Right ventricle myocardium inferior (tissue), 1 donor: ENCODE measurements at regions of chr5 and their contacts with region 1.

Region 1: DNA sequence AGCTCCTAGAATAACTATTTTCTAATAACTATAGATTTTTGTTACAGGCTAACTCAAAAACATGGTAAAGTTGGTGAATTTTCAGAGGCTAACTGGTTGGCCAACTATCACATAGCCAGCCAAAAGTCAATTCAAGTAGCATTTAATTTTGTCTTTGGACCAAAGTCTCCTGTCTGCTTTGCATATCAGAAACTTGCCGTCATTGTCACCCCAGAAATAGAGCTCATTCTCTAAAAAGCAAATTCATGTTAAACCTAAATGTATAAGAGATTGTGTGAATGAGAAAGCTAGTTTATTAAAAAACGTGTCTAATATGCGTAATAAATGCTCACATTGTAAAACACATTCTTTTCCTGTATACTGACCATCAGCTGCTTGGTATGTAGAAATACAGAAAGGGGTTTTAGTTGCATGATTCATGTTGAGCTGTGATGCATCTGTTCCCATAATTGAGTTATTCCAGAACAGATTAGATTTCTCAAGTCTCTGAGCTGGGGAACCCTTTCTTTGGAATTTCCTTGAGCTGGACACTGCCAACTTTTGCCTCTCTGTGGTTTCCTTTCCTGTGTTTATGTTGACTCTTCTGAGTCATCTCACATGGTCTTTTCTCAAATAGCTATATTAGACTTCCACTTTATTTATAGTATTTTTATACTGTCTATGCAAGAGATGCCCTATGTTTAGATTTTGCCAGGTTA is 7.3 kb downstream of the SRFBP1 start:
- DNase-seq: no peak
- ATAC-seq: peak; percentile 68

Region 2: DNA sequence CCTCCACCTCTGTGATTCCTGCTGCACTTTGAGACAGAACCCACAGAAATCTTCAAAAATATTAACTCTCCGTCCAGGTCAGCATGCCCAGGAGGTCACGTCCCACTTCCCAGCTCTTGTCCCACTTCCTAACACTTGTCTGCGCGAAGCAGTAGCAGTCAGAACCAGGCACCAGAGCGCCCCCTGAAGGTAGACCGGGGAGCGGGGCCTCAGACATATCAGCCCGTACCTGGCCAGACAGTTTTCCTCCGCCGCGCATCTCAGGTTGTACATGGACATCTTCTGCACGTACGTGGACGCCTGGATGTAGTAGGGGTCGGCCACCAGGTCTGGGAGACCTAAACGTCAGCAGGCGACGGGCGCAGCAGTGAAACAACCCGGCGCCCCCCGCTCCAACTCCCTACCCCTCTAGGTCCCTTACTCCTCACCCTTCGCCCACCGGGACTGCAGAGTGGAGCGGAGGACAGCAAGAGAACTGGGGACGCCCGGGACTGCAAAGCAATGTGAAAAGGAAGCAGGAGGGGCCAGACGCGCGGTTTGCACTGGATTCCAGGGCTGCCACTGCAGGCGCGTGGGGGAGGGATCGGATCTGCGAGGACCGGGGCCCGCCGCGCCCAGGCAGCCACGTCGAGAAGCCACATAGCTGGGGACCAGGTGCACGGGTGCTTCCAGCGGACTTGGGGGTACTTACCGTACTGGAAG is 107.8 kb after region 1 on chr5:
- intact Hi-C with region 1: loop called (anchors 5 kb)
- DNase-seq: peak; percentile 84
- ATAC-seq: peak; percentile 80

Region 3: GRCh38 chr5:122101636-122102285 is 132.7 kb after region 1 on chr5:
- intact Hi-C with region 1: loop called (anchors 5 kb)
- DNase-seq: no peak
- ATAC-seq: no peak